Caco-2 (cell line): ENCODE measurements at regions of chr14 and their contacts with region 1.

Region 1: GRCh38 chr14:24093901-24094761 is at the start of gene PCK2:
- DNase-seq: peak; percentile 98
- H3K4me3 ChIP-seq: peak within 1 kb of the TSS; percentile 60
- H3K4me3 Mint-ChIP-seq: peak within 1 kb of the TSS; percentile 97
- H3K27ac Mint-ChIP-seq: peak within 1 kb of the TSS; percentile 99
- H3K4me1 ChIP-seq: peaks cover 21% of the 10 kb centered on the region
- H3K4me1 Mint-ChIP-seq: peaks cover 24% of the 10 kb centered on the region
- H3K27me3 ChIP-seq: no peaks in the 10 kb centered on the region
- H3K27me3 Mint-ChIP-seq: no peaks in the 10 kb centered on the region
- CTCF ChIP-seq: no peak
- total RNA-seq, gene PCK2: 132 and 146 TPM in 2 replicates

Region 2: GRCh38 chr14:24058260-24058950 is 35.7 kb before region 1 on chr14:
- CTCF ChIA-PET with region 1: interaction called, 129 read pairs
- POLR2A ChIA-PET with region 1: interaction called, 14 read pairs
- intact Hi-C with region 1: loop called (anchors 1 kb)
- DNase-seq: peak; percentile 70 to 81
- H3K4me3 ChIP-seq: no peak overlapping the region
- H3K4me3 Mint-ChIP-seq: no peak overlapping the region
- H3K27ac Mint-ChIP-seq: no peak overlapping the region
- H3K4me1 ChIP-seq: no peaks in the 10 kb centered on the region; the same call in 1 of the 2 replicates
- H3K4me1 Mint-ChIP-seq: no peaks in the 10 kb centered on the region
- H3K27me3 ChIP-seq: no peaks in the 10 kb centered on the region
- H3K27me3 Mint-ChIP-seq: peaks cover 3% of the 10 kb centered on the region
- CTCF ChIP-seq: peak; percentile 66 to 85

Region 3: GRCh38 chr14:24080888-24081738 is 13.0 kb before region 1 on chr14:
- CTCF ChIA-PET with region 1: interaction called, 10 read pairs
- POLR2A ChIA-PET with region 1: interaction called, 27 read pairs
- intact Hi-C with region 1: no loop called
- DNase-seq: peak; percentile 65 to 71
- H3K4me3 ChIP-seq: peak overlapping the region; percentile 71
- H3K4me3 Mint-ChIP-seq: peak overlapping the region; percentile 78
- H3K27ac Mint-ChIP-seq: no peak overlapping the region
- H3K4me1 ChIP-seq: peaks cover 14% of the 10 kb centered on the region
- H3K4me1 Mint-ChIP-seq: peaks cover 8% of the 10 kb centered on the region
- H3K27me3 ChIP-seq: no peaks in the 10 kb centered on the region; the same call in 1 of the 2 replicates
- H3K27me3 Mint-ChIP-seq: no peaks in the 10 kb centered on the region
- CTCF ChIP-seq: no peak

Region 4: DNA sequence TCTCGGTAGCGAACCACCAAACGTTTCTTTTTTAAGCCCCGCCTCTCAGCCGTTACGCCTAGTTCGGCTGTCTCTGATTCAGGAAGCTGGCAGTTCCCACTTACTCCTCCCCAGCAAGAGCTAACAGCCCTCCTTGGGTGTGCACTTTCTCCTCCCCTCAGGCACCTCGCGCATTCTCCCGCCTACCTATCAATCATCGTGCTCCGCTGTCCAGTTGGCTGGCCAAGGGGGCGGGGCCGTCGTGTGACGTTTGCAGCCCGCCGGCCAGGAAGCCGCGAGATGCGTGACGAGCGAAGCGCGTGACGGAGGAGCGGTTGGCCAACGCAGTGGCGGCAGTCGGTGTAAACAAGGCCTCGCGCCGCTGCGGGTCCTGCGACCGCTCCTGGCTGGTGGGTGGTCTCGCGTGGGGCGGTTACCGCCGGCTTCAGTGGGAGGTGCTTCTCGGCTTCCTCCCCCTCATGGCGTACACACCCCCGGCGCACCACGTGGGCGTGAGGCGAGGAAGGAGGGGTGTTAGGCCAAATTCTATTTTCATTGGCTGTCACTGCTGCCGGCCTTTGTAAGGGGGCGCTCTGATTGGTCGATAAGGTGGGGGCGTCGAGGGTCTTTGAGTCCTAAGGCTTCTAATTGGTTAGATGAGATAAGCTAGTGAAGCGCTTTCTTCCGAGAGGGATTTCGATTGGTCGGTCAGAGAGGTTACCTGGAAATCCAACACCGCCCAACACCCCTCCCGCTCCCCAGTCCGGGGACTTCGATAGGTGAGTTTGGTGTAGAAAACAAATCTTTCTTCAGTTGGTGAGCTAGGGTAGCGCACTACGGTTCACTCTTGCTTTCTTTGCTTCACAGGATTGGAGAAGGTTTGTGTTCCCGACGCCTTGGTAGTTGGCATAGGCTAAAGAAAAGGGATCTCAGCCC is 20.7 kb after region 1 on chr14 and contains the starts of genes DCAF11 and NRL:
- CTCF ChIA-PET with region 1: interaction called, 93 read pairs
- POLR2A ChIA-PET with region 1: interaction called, 72 read pairs
- intact Hi-C with region 1: loop called (anchors 1 kb)
- DNase-seq: peak; percentile 98 to 99
- H3K4me3 ChIP-seq: peak within 1 kb of the TSS; percentile 77
- H3K4me3 Mint-ChIP-seq: peak within 1 kb of the TSS; percentile 100
- H3K27ac Mint-ChIP-seq: peak within 1 kb of the TSS; percentile 98
- H3K4me1 ChIP-seq: no peaks in the 10 kb centered on the region
- H3K4me1 Mint-ChIP-seq: peaks cover 13% of the 10 kb centered on the region
- H3K27me3 ChIP-seq: no peaks in the 10 kb centered on the region
- H3K27me3 Mint-ChIP-seq: no peaks in the 10 kb centered on the region
- CTCF ChIP-seq: no peak
- total RNA-seq, gene DCAF11: 58.1 and 65.9 TPM in 2 replicates
- total RNA-seq, gene NRL: 2.1 and 2.3 TPM in 2 replicates

Region 5: GRCh38 chr14:24141097-24141880 is 47.2 kb after region 1 on chr14 and contains the start of gene EMC9:
- CTCF ChIA-PET with region 1: interaction called, 6 read pairs
- POLR2A ChIA-PET with region 1: interaction called, 13 read pairs
- intact Hi-C with region 1: no loop called
- DNase-seq: peak; percentile 99 to 100
- H3K4me3 ChIP-seq: peak within 1 kb of the TSS; percentile 84
- H3K4me3 Mint-ChIP-seq: peak within 1 kb of the TSS; percentile 99
- H3K27ac Mint-ChIP-seq: peak within 1 kb of the TSS; percentile 88
- H3K4me1 ChIP-seq: no peaks in the 10 kb centered on the region; the same call in 1 of the 2 replicates
- H3K4me1 Mint-ChIP-seq: peaks cover 43% of the 10 kb centered on the region
- H3K27me3 ChIP-seq: no peaks in the 10 kb centered on the region
- H3K27me3 Mint-ChIP-seq: no peaks in the 10 kb centered on the region
- CTCF ChIP-seq: peak; percentile 13 to 50
- total RNA-seq, gene EMC9: 31.1 and 32.4 TPM in 2 replicates

Region 6: GRCh38 chr14:24233538-24233866 is 139.4 kb after region 1 on chr14:
- CTCF ChIA-PET with region 1: no interaction called
- POLR2A ChIA-PET with region 1: no interaction called
- intact Hi-C with region 1: no loop called
- DNase-seq: peak in 1 of 2 experiments; percentile 22
- H3K4me3 ChIP-seq: peak overlapping the region; percentile 76
- H3K4me3 Mint-ChIP-seq: peak overlapping the region; percentile 81
- H3K27ac Mint-ChIP-seq: peak overlapping the region; percentile 85
- H3K4me1 ChIP-seq: no peaks in the 10 kb centered on the region
- H3K4me1 Mint-ChIP-seq: peaks cover 9% of the 10 kb centered on the region
- H3K27me3 ChIP-seq: no peaks in the 10 kb centered on the region
- H3K27me3 Mint-ChIP-seq: no peaks in the 10 kb centered on the region
- CTCF ChIP-seq: no peak

Region 7: DNA sequence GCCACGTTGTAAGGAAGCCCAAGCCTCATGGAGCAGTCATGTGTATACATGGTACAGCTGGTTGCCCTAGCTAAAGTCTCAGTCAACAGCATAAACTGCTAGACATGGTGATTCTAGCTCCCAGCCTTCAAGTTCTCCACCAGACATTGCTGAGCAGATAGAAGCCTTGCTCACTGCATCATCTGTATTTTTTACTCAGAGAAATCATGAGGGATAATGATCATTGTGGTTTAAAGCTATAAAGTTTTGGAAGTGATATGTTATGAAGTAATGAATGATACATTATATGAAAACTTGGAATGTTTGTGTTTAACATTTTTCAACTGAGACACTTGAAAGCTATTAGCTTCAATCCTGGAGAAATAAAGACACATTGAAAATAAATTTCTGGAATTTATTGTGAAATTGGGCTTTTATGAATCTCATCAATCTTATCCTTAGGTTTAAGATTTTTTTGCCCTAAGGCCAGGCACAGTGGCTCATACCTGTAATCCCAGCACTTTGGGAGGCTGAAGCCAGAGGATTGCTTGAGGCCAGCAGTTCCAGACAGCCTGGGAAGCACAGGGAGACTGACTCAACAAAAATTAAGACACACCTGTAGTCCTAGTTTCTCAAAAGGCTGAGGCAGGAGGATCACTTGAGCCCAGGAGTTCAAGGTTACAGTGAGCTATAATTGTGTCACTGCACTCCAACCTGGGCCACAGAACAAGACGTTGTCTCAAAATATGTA is 268.3 kb after region 1 on chr14:
- CTCF ChIA-PET with region 1: no interaction called
- POLR2A ChIA-PET with region 1: no interaction called
- intact Hi-C with region 1: no loop called
- DNase-seq: no peak
- H3K4me3 ChIP-seq: no peak overlapping the region
- H3K4me3 Mint-ChIP-seq: no peak overlapping the region
- H3K27ac Mint-ChIP-seq: no peak overlapping the region
- H3K4me1 ChIP-seq: peaks cover 1% of the 10 kb centered on the region; the same call in 1 of the 2 replicates
- H3K4me1 Mint-ChIP-seq: peaks cover 13% of the 10 kb centered on the region
- H3K27me3 ChIP-seq: no peaks in the 10 kb centered on the region
- H3K27me3 Mint-ChIP-seq: no peaks in the 10 kb centered on the region
- CTCF ChIP-seq: no peak